ENCODE measurements at regions of chr2 and their contacts with region 1.

Region 1: GRCh38 chr2:118032169-118033013 is 18.5 kb upstream of the CCDC93 start:
- DNase-seq: peak; percentile 36
- H3K4me3 ChIP-seq: no peak overlapping the region
- H3K27ac ChIP-seq: no peak overlapping the region
- H3K4me1 ChIP-seq: no peaks in the 10 kb centered on the region
- H3K27me3 ChIP-seq: peaks cover 2 to 7% of the 10 kb centered on the region in 2 experiments
- CTCF ChIP-seq: peak; percentile 65 to 72
- POLR2A ChIP-seq: no peak

Region 2: DNA sequence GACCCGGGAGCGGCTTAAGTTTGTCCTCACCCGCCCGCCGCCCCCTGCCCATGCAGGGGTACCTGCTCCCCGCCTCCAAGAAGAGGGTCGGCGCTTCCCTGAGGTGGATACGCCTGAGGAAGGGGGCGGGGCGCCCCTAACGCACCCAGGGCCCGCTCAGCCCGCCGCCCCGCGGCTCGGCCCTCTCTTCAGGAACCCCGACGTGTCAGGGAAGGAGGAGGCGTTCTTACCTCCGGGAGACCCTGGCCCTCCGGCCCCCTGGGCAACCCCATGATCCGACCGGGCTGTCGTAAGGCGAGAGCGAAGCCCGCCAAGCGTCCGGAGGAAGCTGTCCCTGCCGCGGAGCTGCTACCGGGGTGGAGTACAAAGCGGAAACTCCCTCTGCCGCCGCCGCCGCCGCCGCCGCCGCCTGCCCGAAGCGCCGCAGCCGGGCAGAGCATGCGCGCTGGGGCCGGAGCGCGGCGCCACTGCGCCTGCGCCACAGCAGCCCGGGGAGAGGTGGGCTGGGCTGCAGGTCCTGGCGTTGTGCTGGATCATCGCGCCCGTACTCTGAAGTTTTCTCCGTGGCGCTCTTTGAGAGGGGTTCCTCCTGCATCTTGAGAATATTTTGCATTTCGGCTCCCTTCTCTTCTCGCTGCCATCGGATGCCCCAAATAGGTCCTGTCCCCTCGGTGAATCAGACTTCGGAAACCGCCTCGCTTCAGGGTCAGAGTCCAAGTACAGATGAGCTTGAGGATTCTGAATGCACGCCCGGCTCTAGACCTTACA is 18.5 kb before region 1 on chr2 and contains the start of gene CCDC93:
- CTCF ChIA-PET with region 1: interaction called, 11 read pairs
- POLR2A ChIA-PET with region 1: no interaction called
- dilution Hi-C with region 1: no loop called
- intact Hi-C with region 1: no loop called
- DNase-seq: peak; percentile 89
- H3K4me3 ChIP-seq: peak within 1 kb of the TSS; percentile 89 to 97 (median 95)
- H3K27ac ChIP-seq: peak within 1 kb of the TSS; percentile 80
- H3K4me1 ChIP-seq: peaks cover 14% of the 10 kb centered on the region
- H3K27me3 ChIP-seq: peaks cover 2 to 3% of the 10 kb centered on the region in 2 experiments
- CTCF ChIP-seq: no peak
- POLR2A ChIP-seq: peak; percentile 71
- total RNA-seq, gene CCDC93: 29.3 and 35.1 TPM in 2 replicates

Region 3: GRCh38 chr2:118021361-118021760 is 11.0 kb before region 1 on chr2:
- CTCF ChIA-PET with region 1: interaction called, 11 read pairs
- POLR2A ChIA-PET with region 1: no interaction called
- dilution Hi-C with region 1: no loop called
- intact Hi-C with region 1: no loop called
- DNase-seq: no peak
- H3K4me3 ChIP-seq: no peak overlapping the region
- H3K27ac ChIP-seq: no peak overlapping the region
- H3K4me1 ChIP-seq: no peaks in the 10 kb centered on the region
- H3K27me3 ChIP-seq: peaks cover 13 to 27% of the 10 kb centered on the region in 2 experiments
- CTCF ChIP-seq: no peak
- POLR2A ChIP-seq: no peak

Region 4: GRCh38 chr2:118061135-118061955 is 29.0 kb after region 1 on chr2:
- CTCF ChIA-PET with region 1: interaction called, 15 read pairs
- POLR2A ChIA-PET with region 1: no interaction called
- dilution Hi-C with region 1: no loop called
- intact Hi-C with region 1: no loop called
- DNase-seq: peak; percentile 7
- H3K4me3 ChIP-seq: no peak overlapping the region
- H3K27ac ChIP-seq: no peak overlapping the region
- H3K4me1 ChIP-seq: no peaks in the 10 kb centered on the region
- H3K27me3 ChIP-seq: peaks cover 5 to 8% of the 10 kb centered on the region in 2 experiments
- CTCF ChIP-seq: no peak
- POLR2A ChIP-seq: no peak

Region 5: DNA sequence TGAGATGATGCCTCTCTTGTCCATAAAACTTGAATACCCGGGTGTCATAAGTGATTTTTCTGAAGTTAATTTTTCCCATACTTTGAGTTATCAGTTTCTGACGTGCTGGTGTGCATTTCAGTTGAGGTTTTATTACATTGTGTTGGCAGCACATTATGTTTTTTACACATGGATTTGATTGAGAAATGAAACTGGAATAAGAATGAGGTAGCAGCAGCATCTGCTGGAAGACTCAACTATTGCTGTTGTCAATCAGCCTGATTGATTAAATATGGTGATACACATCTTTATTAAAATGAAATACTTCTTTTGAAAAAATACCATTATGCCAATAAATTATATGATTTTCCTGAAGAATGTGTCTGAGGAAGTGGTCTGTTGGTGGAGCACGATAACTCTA is 116.4 kb after region 1 on chr2:
- CTCF ChIA-PET with region 1: interaction called, 11 read pairs
- POLR2A ChIA-PET with region 1: no interaction called
- dilution Hi-C with region 1: no loop called
- intact Hi-C with region 1: loop called (anchors 5 kb)
- DNase-seq: peak; percentile 44
- H3K4me3 ChIP-seq: no peak overlapping the region
- H3K27ac ChIP-seq: no peak overlapping the region
- H3K4me1 ChIP-seq: no peaks in the 10 kb centered on the region
- H3K27me3 ChIP-seq: peaks cover 0 to 2% of the 10 kb centered on the region in 2 experiments
- CTCF ChIP-seq: peak in 1 of 2 donors; percentile 24
- POLR2A ChIP-seq: no peak

Region 6: DNA sequence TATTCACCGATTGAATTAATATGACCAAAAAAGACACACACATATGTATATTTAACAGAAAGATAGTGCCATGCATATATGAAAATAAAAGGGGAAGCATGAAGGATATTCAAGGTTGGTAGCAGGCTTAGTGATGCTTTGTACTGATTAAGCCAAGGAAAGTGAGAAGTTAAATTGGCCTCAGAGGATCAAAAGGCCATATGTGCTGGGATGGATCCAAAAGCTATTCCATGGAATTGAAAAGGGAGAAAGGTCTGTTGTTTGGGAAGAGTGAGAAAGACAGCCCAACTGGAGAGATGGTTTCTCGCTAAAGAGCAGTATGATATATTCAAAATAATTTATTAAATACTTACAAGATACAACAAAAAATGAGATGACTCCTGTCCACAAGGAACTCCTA is 121.8 kb after region 1 on chr2:
- CTCF ChIA-PET with region 1: interaction called, 11 read pairs
- POLR2A ChIA-PET with region 1: no interaction called
- dilution Hi-C with region 1: no loop called
- intact Hi-C with region 1: loop called (anchors 5 kb)
- DNase-seq: no peak
- H3K4me3 ChIP-seq: no peak overlapping the region
- H3K27ac ChIP-seq: no peak overlapping the region
- H3K4me1 ChIP-seq: no peaks in the 10 kb centered on the region
- H3K27me3 ChIP-seq: peaks cover under 1 to 6% of the 10 kb centered on the region in 2 experiments
- CTCF ChIP-seq: no peak
- POLR2A ChIP-seq: no peak

Region 7: DNA sequence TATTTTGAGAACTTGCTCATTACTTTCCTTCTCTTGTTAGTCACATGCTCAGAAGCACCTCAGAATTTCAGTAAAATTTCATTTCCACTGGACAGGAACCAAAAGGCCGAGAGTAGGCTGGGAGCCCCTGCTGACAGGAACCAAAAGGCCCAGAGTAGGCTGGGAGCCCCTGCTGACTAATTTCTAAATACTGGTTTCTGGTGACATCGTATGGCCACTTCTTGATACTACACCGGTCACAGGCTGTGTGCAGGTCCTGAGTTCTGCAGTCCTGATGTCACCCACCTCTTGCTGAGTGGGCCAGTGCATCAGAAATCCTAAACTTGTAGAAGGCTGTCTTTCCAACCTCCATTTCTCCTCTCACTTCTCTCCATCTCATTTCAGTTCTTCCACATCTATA is 832.7 kb after region 1 on chr2:
- CTCF ChIA-PET with region 1: interaction called, 13 read pairs
- POLR2A ChIA-PET with region 1: no interaction called
- dilution Hi-C with region 1: no loop called
- intact Hi-C with region 1: no loop called
- DNase-seq: peak; percentile 55
- H3K4me3 ChIP-seq: no peak overlapping the region
- H3K27ac ChIP-seq: no peak overlapping the region
- H3K4me1 ChIP-seq: no peaks in the 10 kb centered on the region
- H3K27me3 ChIP-seq: peaks cover 12 to 17% of the 10 kb centered on the region in 2 experiments
- CTCF ChIP-seq: peak; percentile 36 to 52
- POLR2A ChIP-seq: no peak

Measured in endothelial cell of umbilical vein (primary cell).